ENCODE measurements at regions of chr2 and their contacts with region 1.

Region 1: DNA sequence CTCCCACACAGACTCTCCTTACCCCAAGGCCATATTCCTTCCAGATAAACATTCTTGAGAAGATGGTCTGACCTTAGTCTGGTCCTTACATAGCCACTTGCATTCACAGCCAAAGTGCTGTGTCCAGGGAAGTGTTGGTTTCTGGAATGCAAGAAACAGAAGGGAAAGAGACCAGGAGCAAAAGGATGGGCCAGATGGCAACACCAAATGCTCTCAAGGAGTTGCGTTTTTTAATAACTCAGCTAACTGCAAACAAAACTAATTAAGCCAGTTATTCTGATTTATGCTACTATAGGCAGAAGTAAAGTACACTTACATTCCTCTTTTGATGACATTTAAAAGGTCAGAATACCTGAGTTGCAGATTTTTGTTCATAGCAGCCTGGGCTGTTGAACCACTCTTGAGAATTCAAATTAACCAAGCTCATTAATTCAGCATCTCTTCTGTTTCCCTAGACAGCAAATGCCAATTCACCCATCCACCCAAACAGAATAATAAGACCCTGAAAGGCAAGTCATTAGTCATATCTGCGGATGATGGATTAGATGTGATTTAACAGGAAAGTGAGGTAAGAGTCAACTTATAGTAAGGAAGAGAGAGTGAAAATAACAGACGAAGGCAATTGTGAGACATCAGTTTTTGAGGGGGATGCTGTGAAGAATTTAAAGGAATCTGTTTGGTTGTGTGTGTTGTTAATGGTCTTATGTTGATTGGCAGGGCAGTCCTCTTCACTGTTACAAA is 18.8 kb downstream of the CCDC85A start:
- DNase-seq: no peak
- H3K4me3 ChIP-seq: no peak overlapping the region
- H3K27ac ChIP-seq: no peak overlapping the region
- H3K4me1 ChIP-seq: no peaks in the 10 kb centered on the region
- H3K27me3 ChIP-seq: no peaks in the 10 kb centered on the region
- CTCF ChIP-seq: no peak

Region 2: GRCh38 chr2:56369316-56369715 is 166.8 kb after region 1 on chr2:
- intact Hi-C with region 1: loop called (anchors 10 kb)
- DNase-seq: no peak
- H3K4me3 ChIP-seq: no peak overlapping the region
- H3K27ac ChIP-seq: no peak overlapping the region
- H3K4me1 ChIP-seq: no peaks in the 10 kb centered on the region
- H3K27me3 ChIP-seq: no peaks in the 10 kb centered on the region
- CTCF ChIP-seq: no peak

Region 3: DNA sequence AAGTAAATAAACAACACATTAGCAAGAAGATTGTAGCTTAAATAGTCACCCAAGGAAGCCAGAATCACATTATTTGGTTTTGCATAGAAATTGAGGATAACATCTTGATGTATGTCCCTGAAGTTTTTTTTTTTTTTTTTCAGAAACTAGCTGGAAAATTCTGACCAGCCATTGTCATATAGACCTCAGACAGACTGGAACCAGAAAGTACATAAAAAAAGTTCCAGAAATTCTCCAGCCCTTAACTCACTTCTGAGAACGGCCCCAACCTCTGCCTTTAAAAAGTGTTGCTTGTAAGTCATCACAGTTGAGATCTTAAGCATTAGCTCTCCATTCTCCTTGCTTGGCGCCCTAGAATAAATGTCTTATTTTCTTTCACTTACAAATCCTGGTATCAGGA is 331.8 kb after region 1 on chr2:
- intact Hi-C with region 1: no loop called
- DNase-seq: no peak
- H3K4me3 ChIP-seq: no peak overlapping the region
- H3K27ac ChIP-seq: no peak overlapping the region
- H3K4me1 ChIP-seq: no peaks in the 10 kb centered on the region
- H3K27me3 ChIP-seq: no peaks in the 10 kb centered on the region
- CTCF ChIP-seq: no peak